ENCODE measurements at regions of chr16 and their contacts with region 1.

Region 1: DNA sequence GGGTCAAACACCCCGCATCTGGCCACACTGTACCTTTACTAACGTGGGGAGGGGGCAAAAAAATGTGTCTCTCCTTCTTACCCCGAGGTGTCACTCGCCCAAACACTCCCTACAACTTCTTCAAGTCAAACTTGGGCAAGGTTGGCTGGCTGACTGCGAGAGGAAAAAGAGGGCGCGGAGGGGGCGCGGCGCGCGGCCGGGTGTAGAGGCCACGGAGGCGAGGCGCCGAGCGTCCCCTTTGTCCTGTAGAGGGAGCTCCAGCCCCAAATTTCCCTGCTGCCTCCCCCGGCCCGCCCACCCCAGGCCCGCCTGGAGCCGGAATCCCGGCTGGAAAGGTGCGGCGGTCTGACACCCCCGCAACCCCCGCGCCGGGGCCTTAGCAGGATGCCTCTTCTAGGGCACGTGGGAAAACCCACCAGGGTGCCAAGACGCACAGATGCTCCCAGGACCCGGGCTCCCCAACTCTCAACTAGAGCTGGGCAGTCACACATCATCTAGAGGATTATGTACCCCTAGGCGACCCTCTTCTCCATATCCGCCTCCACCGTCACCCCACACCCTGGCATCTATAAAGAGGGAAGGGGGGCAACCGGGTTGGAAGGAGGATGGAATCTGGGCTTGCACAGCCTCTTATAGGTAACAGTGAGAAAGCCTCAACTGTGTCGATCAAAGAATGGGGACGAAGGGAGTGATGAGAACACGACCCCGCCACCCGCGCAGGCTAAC is 4.2 kb downstream of the IRX3 start:
- DNase-seq: peak in 1 of 2 experiments; percentile 84
- H3K4me3 ChIP-seq: peak overlapping the region; percentile 30 to 93 (median 46)
- H3K27ac ChIP-seq: no peak overlapping the region
- H3K4me1 ChIP-seq: peaks cover 0 to 18% (median 8%) of the 10 kb centered on the region in 4 experiments; a peak in 6 of 7 replicates
- H3K27me3 ChIP-seq: peaks cover 48 to 69% (median 62%) of the 10 kb centered on the region in 4 experiments
- CTCF ChIP-seq: peak; percentile 48 to 73 (median 55)
- EP300 ChIP-seq: no peak
- POLR2A ChIP-seq: no peak
- RAD21 ChIP-seq: peak; percentile 68 to 74

Region 2: GRCh38 chr16:54312502-54312991 is 30.2 kb after region 1 on chr16:
- CTCF ChIA-PET with region 1: no interaction called
- POLR2A ChIA-PET with region 1: no interaction called
- DNase-seq: no peak
- H3K4me3 ChIP-seq: no peak overlapping the region
- H3K27ac ChIP-seq: no peak overlapping the region
- H3K4me1 ChIP-seq: peaks cover 0 to 2% (median 0%) of the 10 kb centered on the region in 4 experiments; a peak in 1 of 7 replicates
- H3K27me3 ChIP-seq: no peaks in the 10 kb centered on the region
- CTCF ChIP-seq: no peak
- EP300 ChIP-seq: no peak
- POLR2A ChIP-seq: no peak
- RAD21 ChIP-seq: no peak

Region 3: GRCh38 chr16:54455030-54455725 is 172.8 kb after region 1 on chr16:
- CTCF ChIA-PET with region 1: no interaction called
- POLR2A ChIA-PET with region 1: no interaction called
- DNase-seq: no peak
- H3K4me3 ChIP-seq: no peak overlapping the region
- H3K27ac ChIP-seq: no peak overlapping the region
- H3K4me1 ChIP-seq: peaks cover 0 to 3% (median 0%) of the 10 kb centered on the region in 4 experiments; a peak in 1 of 7 replicates
- H3K27me3 ChIP-seq: no peaks in the 10 kb centered on the region
- CTCF ChIP-seq: no peak
- EP300 ChIP-seq: no peak
- POLR2A ChIP-seq: no peak
- RAD21 ChIP-seq: no peak

Region 4: GRCh38 chr16:54546521-54546920 is 264.2 kb after region 1 on chr16:
- CTCF ChIA-PET with region 1: no interaction called
- POLR2A ChIA-PET with region 1: no interaction called
- DNase-seq: no peak
- H3K4me3 ChIP-seq: no peak overlapping the region
- H3K27ac ChIP-seq: no peak overlapping the region
- H3K4me1 ChIP-seq: no peaks in the 10 kb centered on the region
- H3K27me3 ChIP-seq: no peaks in the 10 kb centered on the region
- CTCF ChIP-seq: no peak
- EP300 ChIP-seq: no peak
- POLR2A ChIP-seq: no peak
- RAD21 ChIP-seq: no peak

Region 5: DNA sequence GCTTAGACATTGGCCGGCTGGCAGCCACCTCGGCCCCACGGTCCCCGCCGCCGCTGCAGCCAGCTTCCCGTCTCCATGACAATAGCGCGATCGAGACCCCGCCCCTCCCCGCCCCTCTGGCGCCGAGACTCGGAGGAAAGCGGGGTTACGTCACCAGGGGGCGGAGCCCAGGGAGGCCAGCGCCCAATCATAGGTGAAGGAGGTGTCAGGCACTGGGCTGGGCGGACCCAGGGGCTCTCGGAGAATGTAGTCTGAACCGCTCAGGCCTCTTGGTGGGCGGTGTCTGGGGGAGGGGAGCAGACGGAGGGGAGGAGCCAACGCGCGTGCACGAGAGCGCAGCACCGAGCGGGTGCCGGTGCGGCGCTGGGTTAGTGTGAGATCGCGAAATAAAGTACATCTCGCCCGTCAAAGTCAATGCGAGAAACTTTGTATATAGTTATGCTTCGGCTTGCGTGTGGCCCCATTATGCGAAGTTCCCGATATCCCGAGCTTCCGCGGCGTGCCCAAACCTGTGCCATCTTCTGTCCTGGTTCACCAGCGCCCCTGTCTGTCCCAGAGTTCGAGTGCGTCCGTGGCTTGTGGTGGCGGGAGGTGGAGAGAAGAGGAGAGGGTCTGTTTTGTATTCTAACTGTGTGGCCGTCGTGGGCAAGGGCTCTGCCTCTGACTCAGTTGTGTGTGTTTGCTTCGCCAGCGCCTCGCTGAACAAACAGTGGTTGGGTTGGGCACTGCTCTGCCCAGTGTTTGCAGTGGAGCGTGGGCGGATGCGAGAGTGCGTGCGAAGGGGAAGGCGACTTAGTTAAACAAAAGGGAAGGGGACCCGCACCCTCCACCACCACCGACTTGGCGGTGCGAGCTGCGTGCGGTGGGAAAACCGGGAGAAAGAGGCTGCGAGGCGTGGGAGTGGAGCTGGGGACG is 647.0 kb after region 1 on chr16:
- CTCF ChIA-PET with region 1: interaction called, 21 read pairs
- POLR2A ChIA-PET with region 1: interaction called, 6 read pairs
- DNase-seq: peak; percentile 97 to 100
- H3K4me3 ChIP-seq: peak overlapping the region; percentile 69 to 85 (median 80)
- H3K27ac ChIP-seq: no peak overlapping the region
- H3K4me1 ChIP-seq: peaks cover 0 to 19% (median 11%) of the 10 kb centered on the region in 4 experiments; a peak in 6 of 7 replicates
- H3K27me3 ChIP-seq: peaks cover 34 to 73% (median 54%) of the 10 kb centered on the region in 4 experiments
- CTCF ChIP-seq: peak in 1 of 3 experiments; percentile 10; a peak in 1 of 4 replicates
- EP300 ChIP-seq: no peak
- POLR2A ChIP-seq: no peak
- RAD21 ChIP-seq: peak in 1 of 2 experiments; percentile 39; a peak in 3 of 4 replicates

Region 6: GRCh38 chr16:54936979-54937670 is 654.8 kb after region 1 on chr16:
- CTCF ChIA-PET with region 1: interaction called, 21 read pairs
- POLR2A ChIA-PET with region 1: interaction called, 6 read pairs
- DNase-seq: peak in 1 of 2 experiments; percentile 90
- H3K4me3 ChIP-seq: peak overlapping the region; percentile 31 to 68 (median 58)
- H3K27ac ChIP-seq: no peak overlapping the region
- H3K4me1 ChIP-seq: peaks cover 0 to 37% (median 25%) of the 10 kb centered on the region in 4 experiments; a peak in 6 of 7 replicates
- H3K27me3 ChIP-seq: peaks cover 61 to 93% (median 87%) of the 10 kb centered on the region in 4 experiments
- CTCF ChIP-seq: peak; percentile 57 to 83 (median 83)
- EP300 ChIP-seq: no peak
- POLR2A ChIP-seq: no peak
- RAD21 ChIP-seq: peak; percentile 50 to 56